ENCODE measurements at regions of chr18 and their contacts with region 1.

Region 1: GRCh38 chr18:30358555-30358954 is 684.0 kb downstream of the DSC3 start:
- DNase-seq: peak; percentile 95
- H3K4me3 Mint-ChIP-seq: no peak overlapping the region
- H3K27ac Mint-ChIP-seq: no peak overlapping the region
- H3K4me1 Mint-ChIP-seq: peaks cover 15% of the 10 kb centered on the region
- H3K27me3 Mint-ChIP-seq: no peaks in the 10 kb centered on the region
- CTCF ChIP-seq: no peak

Region 2: DNA sequence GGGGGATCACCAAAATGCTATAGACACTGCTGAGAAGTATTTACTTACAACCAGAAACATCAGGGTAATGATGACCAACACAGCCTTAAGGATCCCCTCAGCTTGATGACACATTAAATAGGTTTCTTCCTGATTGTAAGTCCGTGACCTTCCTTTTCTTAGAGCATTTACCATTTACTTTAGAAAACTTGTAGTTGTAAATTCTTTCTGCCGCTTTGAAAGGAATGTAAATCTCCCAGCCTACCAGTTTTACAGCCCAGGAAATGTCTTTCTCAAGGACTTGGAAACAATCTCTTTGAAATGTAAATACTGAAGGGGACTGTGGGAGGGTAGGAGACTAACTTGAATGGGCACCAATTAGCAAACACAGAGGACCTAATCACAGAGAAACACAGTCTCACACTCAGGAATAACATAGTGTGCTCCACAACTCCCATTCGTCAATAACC is 405.4 kb after region 1 on chr18:
- CTCF ChIA-PET with region 1: no interaction called
- POLR2A ChIA-PET with region 1: interaction called, 10 read pairs
- intact Hi-C with region 1: no loop called
- DNase-seq: no peak
- H3K4me3 Mint-ChIP-seq: no peak overlapping the region
- H3K27ac Mint-ChIP-seq: no peak overlapping the region
- H3K4me1 Mint-ChIP-seq: no peaks in the 10 kb centered on the region
- H3K27me3 Mint-ChIP-seq: no peaks in the 10 kb centered on the region
- CTCF ChIP-seq: no peak

Measured in MCF 10A (cell line).